Left ventricle myocardium inferior (tissue), 1 donor: ENCODE measurements at regions of chr3 and their contacts with region 1.

Region 1: DNA sequence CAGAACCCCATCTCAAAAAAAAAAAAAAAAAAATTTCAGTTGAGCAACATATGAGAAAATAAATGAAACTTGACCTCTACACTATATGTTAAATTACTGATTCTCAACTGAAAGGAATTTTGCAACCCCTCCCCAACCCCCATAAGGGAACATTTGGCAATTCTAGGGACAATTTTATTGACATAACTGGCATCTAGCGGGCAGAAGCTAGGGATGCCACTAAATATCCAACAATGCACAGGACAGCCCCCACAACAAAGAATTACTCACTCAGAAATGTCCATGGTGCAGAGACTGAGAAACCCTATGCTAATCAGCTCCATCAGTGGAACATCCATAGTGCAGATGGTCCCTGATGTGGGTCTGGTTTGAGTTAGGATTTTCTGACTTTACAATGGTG is 58.2 kb upstream of the OXTR start:
- DNase-seq: no peak
- H3K4me3 ChIP-seq: no peak overlapping the region
- H3K27ac ChIP-seq: no peak overlapping the region
- H3K4me1 ChIP-seq: no peaks in the 10 kb centered on the region
- H3K27me3 ChIP-seq: no peaks in the 10 kb centered on the region
- CTCF ChIP-seq: no peak

Region 2: DNA sequence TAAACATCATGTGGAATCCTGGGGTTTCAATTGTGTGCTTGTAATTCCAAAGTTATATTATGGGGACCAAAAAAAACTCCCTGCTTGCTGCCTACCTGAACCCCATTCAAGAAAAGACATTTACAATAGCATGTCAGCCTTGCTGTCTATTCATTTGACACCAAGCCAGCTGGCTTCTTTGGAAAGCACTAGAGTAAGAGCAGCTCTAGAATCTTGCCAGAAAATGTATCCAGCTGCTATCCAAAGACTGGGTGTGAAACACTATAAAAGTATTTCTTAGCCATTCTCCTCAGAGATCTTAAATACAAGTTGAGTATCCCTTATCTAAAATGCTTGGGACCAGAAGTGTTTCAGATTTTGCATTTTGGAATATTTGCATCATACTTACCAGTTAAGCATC is 48.2 kb after region 1 on chr3:
- intact Hi-C with region 1: loop called (anchors 2 kb)
- DNase-seq: no peak
- H3K4me3 ChIP-seq: no peak overlapping the region
- H3K27ac ChIP-seq: no peak overlapping the region
- H3K4me1 ChIP-seq: peaks cover 3% of the 10 kb centered on the region
- H3K27me3 ChIP-seq: no peaks in the 10 kb centered on the region
- CTCF ChIP-seq: no peak